ENCODE measurements at regions of chr20 and their contacts with region 1.

Region 1: GRCh38 chr20:19583532-19584175 is 174.4 kb upstream of the RIN2 start:
- DNase-seq: peak; percentile 43
- ATAC-seq: peak; percentile 78 to 82

Region 2: DNA sequence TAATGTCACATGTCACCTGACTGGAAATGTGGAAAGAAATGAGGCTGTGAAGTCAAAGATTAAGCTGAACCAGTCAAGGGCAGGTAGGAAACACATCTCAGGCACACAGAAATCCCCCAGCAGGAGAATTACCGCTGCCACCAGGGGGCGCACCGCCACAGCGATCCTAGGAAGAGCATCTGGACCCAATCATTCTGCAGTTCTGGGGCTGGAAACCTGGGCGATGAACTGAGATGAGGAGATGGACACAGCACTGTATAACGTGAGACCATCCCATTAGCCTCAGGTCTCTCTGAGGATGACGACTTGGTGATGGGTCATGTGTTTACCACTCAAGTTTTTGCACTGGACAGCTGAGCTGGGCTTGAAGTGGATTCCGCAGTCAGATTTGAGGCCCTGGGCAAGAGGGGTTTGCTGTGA is 377.7 kb before region 1 on chr20:
- intact Hi-C with region 1: loop called (anchors 5 to 10 kb)
- DNase-seq: peak; percentile 68
- ATAC-seq: peak; percentile 54 to 74

Region 3: GRCh38 chr20:19540392-19540791 is 43.3 kb before region 1 on chr20:
- intact Hi-C with region 1: no loop called
- DNase-seq: peak; percentile 24
- ATAC-seq: peak; percentile 40 to 55